ENCODE measurements at regions of chr11 and their contacts with region 1.

Region 1: GRCh38 chr11:9265211-9266131 is at the start of gene DENND5A:
- DNase-seq: peak; percentile 65
- ATAC-seq: peak; percentile 51
- H3K4me3 Mint-ChIP-seq: peak within 1 kb of the TSS; percentile 90
- H3K27ac Mint-ChIP-seq: peak within 1 kb of the TSS; percentile 98
- H3K4me1 Mint-ChIP-seq: peaks cover 28% of the 10 kb centered on the region
- H3K27me3 Mint-ChIP-seq: peaks cover 3% of the 10 kb centered on the region
- CTCF ChIP-seq: no peak
- total RNA-seq, gene DENND5A: 40.6 to 44.3 TPM

Region 2: DNA sequence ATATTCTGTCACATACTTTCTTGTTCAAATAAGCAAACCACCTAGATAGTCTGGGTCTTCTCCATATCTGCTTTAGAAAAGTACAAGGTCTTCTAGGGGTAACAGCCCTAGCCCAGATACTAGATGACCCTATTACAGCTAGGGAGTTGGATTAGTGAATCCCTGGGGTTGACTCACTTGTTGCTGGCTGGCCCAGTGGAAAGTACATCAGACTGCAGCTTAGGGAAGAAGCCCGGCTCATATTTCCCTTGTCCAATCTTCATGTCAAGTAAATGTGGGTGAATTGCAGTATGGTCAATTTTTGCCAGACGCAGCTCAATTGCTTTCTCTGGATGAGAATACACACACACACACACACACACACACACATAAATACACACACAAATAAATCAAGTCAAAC is 95.0 kb before region 1 on chr11:
- CTCF ChIA-PET with region 1: no interaction called
- POLR2A ChIA-PET with region 1: no interaction called
- intact Hi-C with region 1: loop called (anchors 10 kb)
- DNase-seq: no peak
- ATAC-seq: no peak
- H3K4me3 Mint-ChIP-seq: no peak overlapping the region
- H3K27ac Mint-ChIP-seq: no peak overlapping the region
- H3K4me1 Mint-ChIP-seq: peaks cover 11% of the 10 kb centered on the region
- H3K27me3 Mint-ChIP-seq: no peaks in the 10 kb centered on the region
- CTCF ChIP-seq: no peak

Region 3: DNA sequence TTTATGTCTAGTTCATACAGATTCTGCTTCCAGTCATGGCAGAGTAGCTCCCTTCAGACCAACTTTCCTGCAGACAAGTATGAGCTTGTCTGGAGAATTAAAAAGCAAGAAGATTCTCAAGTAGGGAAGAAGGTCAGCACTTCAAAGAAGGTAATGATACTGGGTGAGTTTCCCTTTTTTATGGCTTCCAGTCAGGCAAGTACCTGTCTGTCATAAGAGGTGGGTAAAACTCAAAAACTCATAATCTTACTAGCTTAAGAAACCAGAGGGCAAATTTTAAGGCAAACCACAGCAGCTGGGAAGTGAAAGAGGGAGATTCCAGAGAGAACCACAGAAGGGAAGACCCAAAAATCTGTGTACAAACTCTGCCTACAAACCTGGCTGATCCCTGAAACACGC is 54.5 kb before region 1 on chr11:
- CTCF ChIA-PET with region 1: interaction called, 3 read pairs
- POLR2A ChIA-PET with region 1: interaction called, 3 read pairs
- intact Hi-C with region 1: loop called (anchors 5 kb)
- DNase-seq: peak; percentile 34
- ATAC-seq: peak; percentile 27
- H3K4me3 Mint-ChIP-seq: no peak overlapping the region
- H3K27ac Mint-ChIP-seq: peak overlapping the region; percentile 13
- H3K4me1 Mint-ChIP-seq: peaks cover 67% of the 10 kb centered on the region
- H3K27me3 Mint-ChIP-seq: no peaks in the 10 kb centered on the region
- CTCF ChIP-seq: no peak

Region 4: DNA sequence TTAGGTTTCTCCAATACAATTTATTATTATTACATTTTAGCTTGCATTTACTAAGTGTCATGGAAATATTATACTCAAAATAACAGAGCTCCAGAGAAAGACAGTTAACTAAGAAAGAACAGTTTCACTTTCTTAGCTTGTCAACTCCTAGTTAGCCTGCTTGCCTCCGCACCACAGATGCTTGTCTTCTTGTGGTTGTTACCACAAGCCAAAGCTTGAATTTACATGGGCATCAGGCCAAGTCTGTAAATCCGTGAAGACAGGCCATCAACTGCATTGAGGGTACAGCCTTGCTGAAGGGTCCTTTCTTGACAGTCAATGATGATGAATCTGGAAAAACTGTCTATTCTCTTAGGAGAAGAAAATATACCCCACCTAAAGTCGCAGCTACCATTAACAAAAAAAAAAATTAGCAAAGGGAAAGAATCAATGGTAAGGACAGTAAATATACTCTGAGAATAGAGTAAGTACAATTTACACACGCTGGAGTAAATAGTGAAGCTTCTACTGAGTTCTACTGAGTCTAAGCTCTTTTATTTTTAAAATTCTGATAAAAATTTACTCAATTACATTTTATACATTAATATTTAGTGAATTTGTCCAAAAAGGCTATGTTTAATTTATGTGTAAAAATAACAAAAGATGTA is 15.3 kb after region 1 on chr11:
- CTCF ChIA-PET with region 1: interaction called, 4 read pairs
- POLR2A ChIA-PET with region 1: interaction called, 5 read pairs
- intact Hi-C with region 1: loop called (anchors 1 kb)
- DNase-seq: peak; percentile 76
- ATAC-seq: peak; percentile 90
- H3K4me3 Mint-ChIP-seq: no peak overlapping the region
- H3K27ac Mint-ChIP-seq: no peak overlapping the region
- H3K4me1 Mint-ChIP-seq: peaks cover 11% of the 10 kb centered on the region
- H3K27me3 Mint-ChIP-seq: no peaks in the 10 kb centered on the region
- CTCF ChIP-seq: no peak

Region 5: GRCh38 chr11:9293646-9294045 is 28.2 kb after region 1 on chr11:
- CTCF ChIA-PET with region 1: no interaction called
- POLR2A ChIA-PET with region 1: no interaction called
- intact Hi-C with region 1: no loop called
- DNase-seq: no peak
- ATAC-seq: no peak
- H3K4me3 Mint-ChIP-seq: no peak overlapping the region
- H3K27ac Mint-ChIP-seq: no peak overlapping the region
- H3K4me1 Mint-ChIP-seq: peaks cover 6% of the 10 kb centered on the region
- H3K27me3 Mint-ChIP-seq: no peaks in the 10 kb centered on the region
- CTCF ChIP-seq: no peak

Region 6: GRCh38 chr11:9314291-9315036 is 49.0 kb after region 1 on chr11 and contains the start of gene TMEM41B:
- CTCF ChIA-PET with region 1: no interaction called
- POLR2A ChIA-PET with region 1: interaction called, 10 read pairs
- intact Hi-C with region 1: loop called (anchors 5 kb)
- DNase-seq: peak; percentile 99
- ATAC-seq: peak; percentile 94
- H3K4me3 Mint-ChIP-seq: peak within 1 kb of the TSS; percentile 97
- H3K27ac Mint-ChIP-seq: peak within 1 kb of the TSS; percentile 98
- H3K4me1 Mint-ChIP-seq: peaks cover 26% of the 10 kb centered on the region
- H3K27me3 Mint-ChIP-seq: peaks cover 8% of the 10 kb centered on the region
- CTCF ChIP-seq: no peak
- total RNA-seq, gene TMEM41B: 20.4 to 23.0 TPM

Region 7: DNA sequence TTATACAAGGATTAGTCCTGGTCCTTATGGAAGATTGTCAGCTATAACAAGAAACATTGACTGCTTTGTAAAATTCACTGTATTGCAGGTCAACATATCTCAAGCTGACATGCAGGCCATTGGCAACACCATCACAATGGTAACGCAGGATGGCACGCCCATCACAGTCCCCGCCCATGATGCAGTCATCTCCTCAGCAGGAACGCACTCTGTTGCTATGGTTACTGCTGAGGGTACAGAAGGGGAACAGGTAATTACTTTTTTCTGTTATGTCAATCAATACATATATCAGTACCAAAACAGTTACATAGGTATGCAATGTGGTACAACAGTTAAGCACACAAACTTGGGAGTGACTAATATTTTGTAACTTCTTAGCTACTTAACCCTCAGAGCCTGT is 250.6 kb after region 1 on chr11:
- CTCF ChIA-PET with region 1: no interaction called
- POLR2A ChIA-PET with region 1: no interaction called
- intact Hi-C with region 1: no loop called
- DNase-seq: no peak
- ATAC-seq: no peak
- H3K4me3 Mint-ChIP-seq: no peak overlapping the region
- H3K27ac Mint-ChIP-seq: no peak overlapping the region
- H3K4me1 Mint-ChIP-seq: no peaks in the 10 kb centered on the region
- H3K27me3 Mint-ChIP-seq: no peaks in the 10 kb centered on the region
- CTCF ChIP-seq: no peak

Region 8: GRCh38 chr11:9601037-9601875 is 335.8 kb after region 1 on chr11:
- CTCF ChIA-PET with region 1: no interaction called
- POLR2A ChIA-PET with region 1: no interaction called
- intact Hi-C with region 1: no loop called
- DNase-seq: peak; percentile 92
- ATAC-seq: peak; percentile 87
- H3K4me3 Mint-ChIP-seq: peak overlapping the region; percentile 60
- H3K27ac Mint-ChIP-seq: peak overlapping the region; percentile 87
- H3K4me1 Mint-ChIP-seq: peaks cover 31% of the 10 kb centered on the region
- H3K27me3 Mint-ChIP-seq: peaks cover 3% of the 10 kb centered on the region
- CTCF ChIP-seq: no peak

Measured in activated CD8-positive, alpha-beta T cell treated with anti-CD3 and anti-CD28 coated beads for 36 hours (primary cell).